Heart left ventricle (tissue), 16 donors: ENCODE measurements at regions of chr16 and their contacts with region 1.

Region 1: GRCh38 chr16:85420501-85421337 is 192.4 kb upstream of the GSE1 start:
- DNase-seq: peak; percentile 44 to 82 (median 54)
- ATAC-seq: peak in 3 of 4 donors; percentile 48 to 71 (median 68)
- H3K4me3 ChIP-seq: no peak overlapping the region
- H3K27ac ChIP-seq: no peak overlapping the region
- H3K4me1 ChIP-seq: peaks cover 0 to 18% (median 3%) of the 10 kb centered on the region in 12 donors
- H3K27me3 ChIP-seq: no peaks in the 10 kb centered on the region
- CTCF ChIP-seq: peak in 11 of 12 donors; percentile 98 to 100 (median 100)
- POLR2A ChIP-seq: peak in 1 of 2 donors; percentile 35

Region 2: GRCh38 chr16:85114909-85115567 is 305.7 kb before region 1 on chr16:
- intact Hi-C with region 1: loop called in 2 of 10 experiments (anchors 10 kb)
- DNase-seq: peak; percentile 86 to 94 (median 88)
- ATAC-seq: peak; percentile 70 to 91 (median 86)
- H3K4me3 ChIP-seq: peak overlapping the region in 4 of 12 donors; percentile 23 to 40 (median 29)
- H3K27ac ChIP-seq: peak overlapping the region in 7 of 12 donors; percentile 23 to 60 (median 49)
- H3K4me1 ChIP-seq: peaks cover 0 to 9% (median 1%) of the 10 kb centered on the region in 12 donors
- H3K27me3 ChIP-seq: no peaks in the 10 kb centered on the region
- CTCF ChIP-seq: peak; percentile 85 to 99 (median 96)
- POLR2A ChIP-seq: no peak

Region 3: GRCh38 chr16:85479972-85480751 is 59.4 kb after region 1 on chr16:
- intact Hi-C with region 1: loop called in 1 of 10 experiments (anchors 10 kb)
- DNase-seq: no peak
- ATAC-seq: peak in 2 of 4 donors; percentile 36 to 38
- H3K4me3 ChIP-seq: no peak overlapping the region
- H3K27ac ChIP-seq: no peak overlapping the region
- H3K4me1 ChIP-seq: peaks cover 0 to 3% (median 0%) of the 10 kb centered on the region in 12 donors
- H3K27me3 ChIP-seq: no peaks in the 10 kb centered on the region
- CTCF ChIP-seq: peak in 10 of 12 donors; percentile 8 to 47 (median 26)
- POLR2A ChIP-seq: no peak

Region 4: DNA sequence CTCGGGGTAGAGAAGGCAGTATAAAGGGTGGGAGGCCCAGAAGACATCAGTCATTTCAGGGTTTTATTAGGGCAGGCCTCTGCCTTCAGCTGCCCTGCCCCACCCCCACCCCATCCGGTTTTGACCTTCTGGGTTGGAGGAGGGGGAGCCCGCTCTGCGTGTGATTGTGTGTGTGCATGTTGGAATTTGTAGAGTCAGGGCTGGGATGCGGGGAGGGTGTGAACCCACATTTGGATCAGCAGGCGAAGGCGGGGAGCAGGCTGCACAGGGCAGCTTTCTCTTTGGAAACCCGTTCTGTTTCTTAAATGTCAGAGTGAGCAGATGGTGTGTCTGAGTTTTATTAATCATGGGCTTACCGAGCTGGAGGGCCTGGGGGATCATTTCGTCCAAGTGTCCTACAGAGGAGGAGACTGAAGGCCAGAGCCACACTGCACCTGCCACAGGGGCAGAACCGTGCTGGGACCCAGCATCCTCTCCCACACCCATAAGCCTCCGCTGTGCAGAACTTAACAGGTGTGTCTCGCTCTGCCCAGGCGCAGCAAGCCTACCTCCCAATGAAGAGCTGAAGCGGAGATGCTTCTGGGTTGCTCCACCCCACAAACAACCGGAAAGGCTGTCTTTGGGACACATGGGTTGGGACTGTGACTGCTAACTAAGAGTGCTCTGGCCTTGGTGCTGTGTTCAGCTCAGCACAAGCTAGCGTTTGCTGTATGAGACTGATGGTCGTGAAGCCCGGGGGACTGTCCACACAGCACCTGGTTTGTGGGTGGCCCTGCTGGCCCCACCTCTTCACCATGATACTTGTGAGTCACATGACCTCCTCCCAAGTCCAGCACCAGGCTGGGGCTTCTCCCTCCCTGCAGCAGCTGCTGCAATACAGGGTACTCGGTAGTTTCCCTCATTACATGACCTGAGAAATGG is 121.5 kb after region 1 on chr16:
- intact Hi-C with region 1: loop called in 1 of 10 experiments (anchors 5 kb)
- DNase-seq: no peak
- ATAC-seq: no peak
- H3K4me3 ChIP-seq: no peak overlapping the region
- H3K27ac ChIP-seq: peak overlapping the region in 1 of 12 donors; percentile 57
- H3K4me1 ChIP-seq: peaks cover 0 to 18% (median 1%) of the 10 kb centered on the region in 12 donors
- H3K27me3 ChIP-seq: no peaks in the 10 kb centered on the region
- CTCF ChIP-seq: no peak
- POLR2A ChIP-seq: no peak

Region 5: GRCh38 chr16:85554112-85554813 is 133.5 kb after region 1 on chr16:
- intact Hi-C with region 1: loop called in 5 of 10 experiments (anchors 2 to 5 kb)
- DNase-seq: peak in 4 of 5 donors; percentile 73 to 83 (median 80)
- ATAC-seq: peak; percentile 40 to 64 (median 54)
- H3K4me3 ChIP-seq: peak overlapping the region; percentile 63 to 96 (median 79)
- H3K27ac ChIP-seq: peak overlapping the region; percentile 47 to 99 (median 90)
- H3K4me1 ChIP-seq: peaks cover 0 to 66% (median 31%) of the 10 kb centered on the region in 12 donors
- H3K27me3 ChIP-seq: no peaks in the 10 kb centered on the region
- CTCF ChIP-seq: no peak
- POLR2A ChIP-seq: no peak

Region 6: GRCh38 chr16:85564277-85565051 is 143.7 kb after region 1 on chr16:
- intact Hi-C with region 1: loop called in 4 of 10 experiments (anchors 5 kb)
- DNase-seq: no peak
- ATAC-seq: no peak
- H3K4me3 ChIP-seq: no peak overlapping the region
- H3K27ac ChIP-seq: peak overlapping the region in 4 of 12 donors; percentile 34 to 66 (median 62)
- H3K4me1 ChIP-seq: peaks cover 0 to 71% (median 30%) of the 10 kb centered on the region in 12 donors
- H3K27me3 ChIP-seq: no peaks in the 10 kb centered on the region
- CTCF ChIP-seq: peak in 11 of 12 donors; percentile 15 to 47 (median 40)
- POLR2A ChIP-seq: no peak